ENCODE measurements at regions of chr11 and their contacts with region 1.

Region 1: GRCh38 chr11:117426269-117426685 is 98.6 kb downstream of the CEP164 start:
- DNase-seq: peak; percentile 55
- ATAC-seq: peak; percentile 81
- H3K4me3 ChIP-seq: no peak overlapping the region; a peak in 1 of 4 replicates
- H3K27ac ChIP-seq: no peak overlapping the region
- H3K4me1 ChIP-seq: no peaks in the 10 kb centered on the region
- H3K27me3 ChIP-seq: no peaks in the 10 kb centered on the region; the same call in 1 of the 2 replicates
- CTCF ChIP-seq: peak; percentile 100

Region 2: GRCh38 chr11:117058761-117059261 is 367.5 kb before region 1 on chr11:
- CTCF ChIA-PET with region 1: no interaction called
- POLR2A ChIA-PET with region 1: no interaction called
- in situ Hi-C with region 1: no loop called
- intact Hi-C with region 1: no loop called
- DNase-seq: no peak
- ATAC-seq: no peak
- H3K4me3 ChIP-seq: no peak overlapping the region
- H3K27ac ChIP-seq: no peak overlapping the region
- H3K4me1 ChIP-seq: peaks cover 15% of the 10 kb centered on the region; the same call in 1 of the 2 replicates
- H3K27me3 ChIP-seq: no peaks in the 10 kb centered on the region
- CTCF ChIP-seq: no peak

Region 3: DNA sequence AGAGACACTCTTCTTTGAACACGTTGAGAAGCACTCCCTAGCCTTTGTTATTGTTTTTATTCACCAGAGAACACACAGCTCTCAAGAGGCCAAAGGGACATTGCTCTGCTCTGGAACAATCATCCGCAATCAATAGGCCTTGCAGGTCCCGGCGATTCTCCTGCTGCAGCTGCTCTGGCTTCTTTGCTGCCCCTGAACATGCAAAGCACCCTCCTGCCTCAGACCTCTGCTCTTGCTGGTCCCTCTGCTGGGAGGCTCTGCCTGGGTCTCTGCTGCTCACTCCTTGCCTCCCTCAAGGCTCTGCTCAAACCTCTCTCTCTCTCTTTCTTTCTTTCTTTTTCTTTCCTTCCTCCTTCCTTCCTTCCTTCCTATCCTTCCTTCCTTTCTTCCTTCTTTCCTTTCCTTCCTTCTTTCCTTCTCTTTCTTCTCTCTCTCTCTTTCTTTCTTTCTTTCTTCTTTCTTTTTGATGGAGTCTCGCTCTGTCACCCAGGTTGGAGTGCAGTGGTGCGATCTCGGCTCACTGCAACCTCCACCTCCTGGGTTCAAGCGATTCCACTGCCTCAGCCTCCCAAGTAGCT is 138.1 kb after region 1 on chr11:
- CTCF ChIA-PET with region 1: interaction called, 18 read pairs
- POLR2A ChIA-PET with region 1: no interaction called
- in situ Hi-C with region 1: no loop called
- intact Hi-C with region 1: no loop called
- DNase-seq: no peak
- ATAC-seq: 0 out of 2 replicates have a peak, but pooled peaks have one; percentile 33
- H3K4me3 ChIP-seq: no peak overlapping the region
- H3K27ac ChIP-seq: no peak overlapping the region
- H3K4me1 ChIP-seq: no peaks in the 10 kb centered on the region
- H3K27me3 ChIP-seq: no peaks in the 10 kb centered on the region; the same call in 1 of the 2 replicates
- CTCF ChIP-seq: no peak

Region 4: GRCh38 chr11:117621226-117621625 is 194.9 kb after region 1 on chr11:
- CTCF ChIA-PET with region 1: interaction called, 15 read pairs
- POLR2A ChIA-PET with region 1: no interaction called
- in situ Hi-C with region 1: no loop called
- intact Hi-C with region 1: loop called (anchors 5 kb)
- DNase-seq: no peak
- ATAC-seq: peak; percentile 68
- H3K4me3 ChIP-seq: no peak overlapping the region
- H3K27ac ChIP-seq: no peak overlapping the region
- H3K4me1 ChIP-seq: no peaks in the 10 kb centered on the region
- H3K27me3 ChIP-seq: peaks cover 2% of the 10 kb centered on the region; the same call in 1 of the 2 replicates
- CTCF ChIP-seq: peak; percentile 83

Region 5: GRCh38 chr11:117807482-117808327 is 381.4 kb after region 1 on chr11:
- CTCF ChIA-PET with region 1: interaction called, 50 read pairs
- POLR2A ChIA-PET with region 1: no interaction called
- in situ Hi-C with region 1: loop called (anchors 25 kb)
- intact Hi-C with region 1: loop called (anchors 2 kb)
- DNase-seq: no peak
- ATAC-seq: peak; percentile 68
- H3K4me3 ChIP-seq: no peak overlapping the region
- H3K27ac ChIP-seq: no peak overlapping the region
- H3K4me1 ChIP-seq: no peaks in the 10 kb centered on the region; the same call in 1 of the 2 replicates
- H3K27me3 ChIP-seq: peaks cover 6% of the 10 kb centered on the region; the same call in 1 of the 2 replicates
- CTCF ChIP-seq: peak; percentile 96

Region 6: GRCh38 chr11:117817368-117818040 is 391.2 kb after region 1 on chr11:
- CTCF ChIA-PET with region 1: interaction called, 25 read pairs
- POLR2A ChIA-PET with region 1: no interaction called
- in situ Hi-C with region 1: loop called (anchors 25 kb)
- intact Hi-C with region 1: no loop called
- DNase-seq: peak; percentile 69
- ATAC-seq: peak; percentile 77
- H3K4me3 ChIP-seq: no peak overlapping the region
- H3K27ac ChIP-seq: 0 out of 2 replicates have a peak overlapping the region, but pooled peaks have one; percentile 4
- H3K4me1 ChIP-seq: peaks cover 20% of the 10 kb centered on the region
- H3K27me3 ChIP-seq: no peaks in the 10 kb centered on the region; the same call in 1 of the 2 replicates
- CTCF ChIP-seq: peak; percentile 100

Region 7: GRCh38 chr11:117946842-117947526 is 520.7 kb after region 1 on chr11:
- CTCF ChIA-PET with region 1: interaction called, 3 read pairs
- POLR2A ChIA-PET with region 1: no interaction called
- in situ Hi-C with region 1: no loop called
- intact Hi-C with region 1: loop called (anchors 10 kb)
- DNase-seq: peak; percentile 82
- ATAC-seq: peak; percentile 98
- H3K4me3 ChIP-seq: no peak overlapping the region
- H3K27ac ChIP-seq: no peak overlapping the region
- H3K4me1 ChIP-seq: no peaks in the 10 kb centered on the region
- H3K27me3 ChIP-seq: peaks cover 15% of the 10 kb centered on the region
- CTCF ChIP-seq: peak; percentile 98

Region 8: DNA sequence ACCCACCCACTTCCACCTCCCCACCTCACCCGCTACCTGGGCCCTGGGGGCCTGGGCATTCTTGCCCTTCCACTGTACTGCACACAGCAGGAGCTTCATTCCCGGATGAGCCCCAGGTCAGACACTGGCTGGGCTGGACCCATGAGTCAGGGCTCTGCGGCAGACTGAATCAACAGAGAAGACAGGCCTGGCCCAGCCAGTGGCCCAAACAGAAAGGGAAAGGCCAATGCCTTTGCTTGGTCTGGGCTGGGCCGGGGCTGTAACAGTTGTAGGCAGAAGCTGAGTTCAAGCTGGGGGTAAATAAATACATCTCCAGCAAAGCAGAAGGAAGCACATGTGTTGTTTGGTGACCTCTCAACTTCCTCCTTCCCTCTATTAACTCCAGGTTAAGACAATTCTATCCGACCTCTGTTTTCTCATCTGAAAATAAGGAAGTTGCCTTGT is 662.2 kb after region 1 on chr11:
- CTCF ChIA-PET with region 1: no interaction called
- POLR2A ChIA-PET with region 1: no interaction called
- in situ Hi-C with region 1: no loop called
- intact Hi-C with region 1: no loop called
- DNase-seq: no peak
- ATAC-seq: no peak
- H3K4me3 ChIP-seq: no peak overlapping the region
- H3K27ac ChIP-seq: no peak overlapping the region
- H3K4me1 ChIP-seq: no peaks in the 10 kb centered on the region
- H3K27me3 ChIP-seq: no peaks in the 10 kb centered on the region
- CTCF ChIP-seq: no peak

Measured in Panc1 (cell line).